ENCODE measurements at regions of chr10 and their contacts with region 1.

Region 1: DNA sequence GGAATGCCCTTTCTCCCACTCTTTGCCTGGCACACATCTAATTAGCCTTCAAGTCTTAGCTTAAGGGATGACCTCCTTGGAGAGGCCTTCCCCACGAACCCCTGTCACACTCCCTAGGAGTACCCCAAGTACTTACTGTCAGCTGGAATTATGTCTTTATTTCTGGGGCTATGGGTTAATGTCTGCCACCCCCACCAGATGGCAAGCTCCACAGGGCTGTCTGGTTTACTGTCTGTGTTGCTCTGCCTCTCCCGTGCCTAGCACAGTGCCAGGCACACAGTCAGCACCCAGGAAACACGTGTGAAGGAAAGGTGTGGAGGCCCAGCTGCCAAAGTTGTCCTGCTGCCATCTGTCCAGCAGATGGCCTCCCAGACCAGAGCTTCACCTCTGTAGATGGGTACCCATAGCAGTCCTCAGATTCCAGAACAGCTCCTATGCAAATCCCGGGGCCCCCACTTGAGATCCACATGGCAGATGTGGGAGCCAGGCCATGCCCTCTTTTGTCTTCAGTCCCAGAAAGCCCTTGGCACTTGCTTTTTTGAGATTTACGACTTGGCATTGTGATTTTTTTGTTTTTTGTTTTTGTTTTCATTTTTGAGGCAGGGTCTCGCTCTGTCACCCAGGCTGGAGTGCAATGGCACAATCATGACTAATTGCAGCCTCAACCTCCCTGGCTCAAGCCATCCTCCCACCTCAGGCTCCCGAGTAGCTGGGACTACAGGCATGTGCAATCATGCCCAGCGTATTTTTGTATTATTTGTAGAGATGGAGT is 17.2 kb upstream of the PALD1 start:
- DNase-seq: peak; percentile 68
- ATAC-seq: peak; percentile 65

Region 2: GRCh38 chr10:70381471-70382421 is 79.7 kb before region 1 on chr10:
- intact Hi-C with region 1: no loop called
- DNase-seq: peak; percentile 74
- ATAC-seq: peak; percentile 71

Region 3: DNA sequence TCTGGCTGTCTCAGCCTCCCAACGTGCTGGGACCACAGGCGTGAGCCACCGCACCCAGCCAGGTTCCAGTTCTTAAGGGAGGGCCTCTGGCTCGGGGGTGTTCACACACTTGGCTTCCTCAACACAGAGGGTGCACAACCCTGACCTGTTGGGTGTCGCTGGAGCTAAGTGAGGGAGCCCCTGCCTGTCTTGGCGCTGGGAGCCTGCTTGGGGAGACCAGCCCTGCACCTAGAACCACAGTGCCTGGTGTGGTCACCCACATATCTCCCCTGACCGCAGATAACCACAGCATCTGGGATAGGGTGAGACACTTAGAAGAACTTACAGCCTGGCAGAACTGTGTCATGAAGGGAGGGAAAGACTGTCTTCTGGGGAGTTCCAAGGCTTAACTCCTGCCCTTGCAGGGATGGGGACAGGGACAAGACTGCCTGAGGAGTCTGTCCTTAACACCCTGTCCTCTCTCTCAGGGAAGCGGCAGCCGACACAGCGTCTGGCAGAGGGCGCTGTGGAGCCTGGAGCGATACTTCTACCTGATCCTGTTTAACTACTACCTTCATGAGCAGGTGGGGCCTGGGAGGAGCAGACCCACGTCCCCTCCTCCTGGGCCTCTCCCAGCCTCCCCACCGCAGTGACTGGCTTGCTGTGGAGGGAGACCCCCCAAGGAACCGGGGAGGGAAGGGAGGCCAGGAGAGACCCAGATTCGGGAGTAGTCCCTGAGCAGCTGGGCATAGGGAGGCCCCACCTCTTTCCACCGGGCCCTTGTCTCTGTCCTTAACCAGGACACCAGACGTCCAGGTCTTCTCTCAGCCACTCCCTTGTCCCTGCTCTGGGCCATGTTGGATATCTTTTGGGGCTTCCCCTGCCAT is 76.2 kb after region 1 on chr10:
- intact Hi-C with region 1: loop called (anchors 2 kb)
- DNase-seq: peak; percentile 41
- ATAC-seq: no peak

Region 4: DNA sequence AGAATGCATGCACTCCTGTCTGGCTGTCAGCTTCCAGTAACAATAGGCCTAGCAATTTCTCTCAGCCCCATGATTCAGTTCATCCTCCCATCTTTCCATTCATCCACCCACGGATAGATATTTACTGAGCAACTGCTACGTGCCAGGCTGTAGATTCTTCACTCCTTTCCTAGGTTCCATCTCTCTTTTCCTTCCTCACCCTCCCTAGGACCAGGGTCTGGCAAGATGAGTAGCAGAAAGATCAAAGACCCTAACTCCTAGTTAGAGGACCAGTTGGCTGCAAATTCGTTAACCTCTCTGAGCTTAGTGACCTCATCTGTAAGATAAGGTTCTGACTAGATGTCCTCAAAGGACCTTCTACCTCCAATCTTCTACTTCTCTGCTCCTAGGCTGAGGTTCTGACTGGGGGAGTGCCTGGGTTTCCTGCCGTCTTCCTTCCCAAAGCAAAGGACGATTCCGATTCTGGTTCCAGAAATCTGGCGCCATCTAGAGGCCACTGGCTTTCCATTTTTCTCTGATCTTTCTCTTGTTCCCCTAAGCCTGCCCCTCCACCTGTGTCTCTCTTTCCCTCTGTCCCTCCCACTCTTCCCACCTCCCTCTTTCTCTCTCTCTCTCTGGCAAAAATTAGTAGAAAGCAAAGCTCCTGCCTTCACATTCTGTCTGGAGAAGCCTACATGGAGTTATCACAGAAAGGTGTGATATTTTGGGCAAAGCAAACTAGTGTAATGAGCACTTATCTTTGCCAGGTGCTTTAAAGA is 297.5 kb after region 1 on chr10:
- intact Hi-C with region 1: loop called (anchors 10 kb)
- DNase-seq: peak; percentile 54
- ATAC-seq: peak; percentile 72